CD8-positive, alpha-beta memory T cell (primary cell): ENCODE measurements at regions of chr5 and their contacts with region 1.

Region 1: DNA sequence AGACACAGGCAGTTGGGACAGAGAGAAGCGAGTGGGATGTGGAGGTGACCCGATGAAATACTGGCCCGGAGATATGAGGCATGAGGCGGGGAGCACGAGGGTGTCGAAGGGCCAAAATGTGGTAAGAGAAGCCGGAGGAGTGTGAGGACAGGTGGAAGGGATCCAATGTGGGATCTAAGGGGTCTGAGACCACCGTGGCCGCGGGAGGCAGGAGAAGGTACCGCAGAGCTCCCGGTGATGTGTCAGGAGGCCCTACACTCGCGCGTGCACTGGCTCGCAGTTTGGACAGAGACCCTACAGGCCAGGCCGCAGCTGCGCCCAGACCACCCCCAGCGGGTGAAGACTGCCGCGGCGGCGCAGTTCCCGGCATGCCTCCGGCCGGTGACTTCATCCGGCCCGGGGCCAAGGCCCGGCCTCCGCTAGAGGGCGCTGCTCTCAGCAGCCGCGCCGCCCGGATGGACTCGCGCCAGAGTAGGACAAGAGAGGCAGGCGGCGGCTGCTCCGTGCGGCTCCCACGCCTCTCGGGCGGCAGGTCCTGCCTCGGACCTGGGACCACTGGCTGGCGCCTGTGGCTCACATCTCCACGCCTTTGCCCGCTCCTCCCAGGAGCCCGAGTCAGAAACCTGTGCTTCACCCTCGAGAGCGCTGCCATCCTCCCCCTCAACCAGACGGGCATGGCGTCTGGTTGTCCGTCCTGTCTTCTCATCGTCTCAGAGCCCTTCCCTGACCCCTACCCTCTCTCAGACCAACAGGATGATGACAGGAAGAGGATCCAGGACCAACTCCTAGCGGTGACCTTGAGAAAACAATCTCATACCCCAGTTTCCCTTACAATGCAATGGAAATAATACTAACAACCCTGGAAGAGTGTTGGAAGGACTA is 35.4 kb upstream of the STING1 start:
- DNase-seq: peak; percentile 82 to 92 (median 87)
- H3K4me3 ChIP-seq: peak overlapping the region; percentile 96
- H3K4me3 Mint-ChIP-seq: peak overlapping the region; percentile 80 to 98 (median 88)
- H3K27ac ChIP-seq: peak overlapping the region; percentile 86
- H3K27ac Mint-ChIP-seq: peak overlapping the region; percentile 89 to 98 (median 94)
- H3K4me1 ChIP-seq: peaks cover 9% of the 10 kb centered on the region
- H3K4me1 Mint-ChIP-seq: peaks cover 20 to 23% (median 22%) of the 10 kb centered on the region in 3 donors
- H3K27me3 ChIP-seq: no peaks in the 10 kb centered on the region
- H3K27me3 Mint-ChIP-seq: peaks cover 4 to 6% of the 10 kb centered on the region in 2 donors

Region 2: DNA sequence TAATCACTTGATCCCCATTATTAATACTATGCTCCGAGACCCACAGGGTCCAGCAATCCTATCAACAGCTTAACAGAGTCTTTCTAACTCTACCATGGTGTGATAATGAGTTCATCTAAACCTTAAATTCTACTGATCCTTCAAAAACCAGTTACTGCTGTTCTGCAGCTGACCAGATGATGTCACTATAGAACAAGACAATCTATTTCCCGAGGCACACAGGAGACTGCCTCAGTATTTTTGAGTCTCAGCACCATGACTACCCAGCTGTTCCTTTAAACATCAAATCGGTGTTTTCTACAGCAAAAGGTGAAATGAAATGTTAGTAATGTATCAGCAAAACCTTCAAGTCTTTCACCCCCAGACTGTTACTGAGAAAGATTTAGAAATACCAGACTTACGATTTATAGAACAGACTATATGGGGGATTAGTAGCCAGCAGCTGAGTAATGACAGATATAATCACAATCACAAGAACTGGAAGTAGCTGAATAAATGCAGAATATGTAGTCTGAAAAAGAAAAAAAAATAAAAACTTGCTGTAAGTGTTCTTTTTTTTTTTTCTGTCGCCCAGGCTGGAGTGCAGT is 95.5 kb before region 1 on chr5:
- CTCF ChIA-PET with region 1: interaction called, 414 read pairs
- POLR2A ChIA-PET with region 1: interaction called, 3 read pairs
- DNase-seq: peak; percentile 6 to 73 (median 66)
- H3K4me3 ChIP-seq: no peak overlapping the region
- H3K4me3 Mint-ChIP-seq: no peak overlapping the region
- H3K27ac ChIP-seq: no peak overlapping the region
- H3K27ac Mint-ChIP-seq: peak overlapping the region in 5 of 8 donors; percentile 44 to 82 (median 56)
- H3K4me1 ChIP-seq: no peaks in the 10 kb centered on the region
- H3K4me1 Mint-ChIP-seq: peaks cover 3 to 6% (median 4%) of the 10 kb centered on the region in 3 donors
- H3K27me3 ChIP-seq: no peaks in the 10 kb centered on the region
- H3K27me3 Mint-ChIP-seq: peaks cover 0 to 2% of the 10 kb centered on the region in 2 donors

Region 3: GRCh38 chr5:139439013-139439903 is 78.7 kb before region 1 on chr5 and contains the start of gene DNAJC18:
- CTCF ChIA-PET with region 1: interaction called, 40 read pairs
- POLR2A ChIA-PET with region 1: interaction called, 6 read pairs
- DNase-seq: peak; percentile 81 to 91 (median 84)
- H3K4me3 ChIP-seq: peak within 1 kb of the TSS; percentile 98
- H3K4me3 Mint-ChIP-seq: peak within 1 kb of the TSS; percentile 95 to 99 (median 98)
- H3K27ac ChIP-seq: peak within 1 kb of the TSS; percentile 95
- H3K27ac Mint-ChIP-seq: peak within 1 kb of the TSS; percentile 94 to 100 (median 99)
- H3K4me1 ChIP-seq: peaks cover 29% of the 10 kb centered on the region
- H3K4me1 Mint-ChIP-seq: peaks cover 31 to 47% (median 45%) of the 10 kb centered on the region in 3 donors
- H3K27me3 ChIP-seq: no peaks in the 10 kb centered on the region
- H3K27me3 Mint-ChIP-seq: no peaks in the 10 kb centered on the region
- total RNA-seq, gene DNAJC18: 25.3 to 25.7 TPM

Region 4: GRCh38 chr5:139458580-139459406 is 59.1 kb before region 1 on chr5:
- CTCF ChIA-PET with region 1: interaction called, 14 read pairs
- POLR2A ChIA-PET with region 1: no interaction called
- DNase-seq: peak; percentile 67 to 91 (median 85)
- H3K4me3 ChIP-seq: no peak overlapping the region
- H3K4me3 Mint-ChIP-seq: peak overlapping the region in 6 of 7 donors; percentile 41 to 81 (median 64)
- H3K27ac ChIP-seq: no peak overlapping the region
- H3K27ac Mint-ChIP-seq: peak overlapping the region; percentile 90 to 98 (median 92)
- H3K4me1 ChIP-seq: peaks cover 60% of the 10 kb centered on the region
- H3K4me1 Mint-ChIP-seq: peaks cover 48 to 66% (median 59%) of the 10 kb centered on the region in 3 donors
- H3K27me3 ChIP-seq: no peaks in the 10 kb centered on the region
- H3K27me3 Mint-ChIP-seq: peaks cover 0 to 2% of the 10 kb centered on the region in 2 donors

Region 5: DNA sequence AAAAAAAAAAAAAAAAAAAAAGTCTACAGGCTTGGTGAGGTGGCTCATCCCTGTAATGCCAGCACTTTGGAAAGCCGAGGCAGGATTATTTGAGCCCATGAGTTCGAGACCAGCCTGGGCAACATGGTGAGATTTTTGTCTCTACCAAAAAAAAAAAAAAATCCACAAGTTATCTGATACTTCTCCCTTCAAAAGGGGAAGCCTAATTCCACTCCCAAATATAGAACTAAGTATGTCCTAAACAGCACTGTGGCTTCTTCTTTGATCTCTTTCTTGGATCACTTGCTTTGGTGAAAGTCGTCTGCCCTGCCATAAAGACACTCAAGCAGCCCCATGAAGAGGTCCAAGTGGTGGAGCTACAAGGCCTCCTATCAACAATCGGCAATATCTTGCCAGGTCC is 16.5 kb before region 1 on chr5:
- CTCF ChIA-PET with region 1: interaction called, 19 read pairs
- POLR2A ChIA-PET with region 1: interaction called, 3 read pairs
- DNase-seq: no peak
- H3K4me3 ChIP-seq: no peak overlapping the region
- H3K4me3 Mint-ChIP-seq: no peak overlapping the region
- H3K27ac ChIP-seq: no peak overlapping the region
- H3K27ac Mint-ChIP-seq: no peak overlapping the region
- H3K4me1 ChIP-seq: no peaks in the 10 kb centered on the region
- H3K4me1 Mint-ChIP-seq: no peaks in the 10 kb centered on the region
- H3K27me3 ChIP-seq: no peaks in the 10 kb centered on the region
- H3K27me3 Mint-ChIP-seq: no peaks in the 10 kb centered on the region

Region 6: DNA sequence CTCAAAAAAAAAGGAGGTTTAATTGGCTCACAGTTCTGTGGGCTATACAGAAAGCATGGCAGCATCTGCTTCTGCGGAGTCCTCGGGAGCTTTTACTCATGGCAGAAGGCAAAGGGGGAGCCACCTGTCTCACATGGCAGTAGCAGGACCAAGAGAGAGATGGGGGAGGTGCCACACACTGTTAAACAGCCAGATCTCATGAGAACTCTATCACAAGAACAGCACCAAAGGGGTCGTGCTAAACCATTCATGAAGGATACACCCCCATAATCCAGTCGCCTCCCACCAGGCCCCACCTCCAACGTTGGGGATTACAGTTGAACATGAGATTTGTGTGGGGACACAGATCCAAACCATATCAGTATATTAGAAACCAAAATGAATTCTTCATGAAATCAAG is 101.9 kb after region 1 on chr5:
- CTCF ChIA-PET with region 1: no interaction called
- POLR2A ChIA-PET with region 1: no interaction called
- DNase-seq: no peak
- H3K4me3 ChIP-seq: no peak overlapping the region
- H3K4me3 Mint-ChIP-seq: no peak overlapping the region
- H3K27ac ChIP-seq: no peak overlapping the region
- H3K27ac Mint-ChIP-seq: peak overlapping the region in 2 of 8 donors; percentile 40 to 76
- H3K4me1 ChIP-seq: no peaks in the 10 kb centered on the region
- H3K4me1 Mint-ChIP-seq: peaks cover 6 to 9% (median 8%) of the 10 kb centered on the region in 3 donors
- H3K27me3 ChIP-seq: no peaks in the 10 kb centered on the region
- H3K27me3 Mint-ChIP-seq: no peaks in the 10 kb centered on the region

Region 7: GRCh38 chr5:139725073-139725830 is 207.3 kb after region 1 on chr5:
- CTCF ChIA-PET with region 1: no interaction called
- POLR2A ChIA-PET with region 1: no interaction called
- DNase-seq: peak in 1 of 5 donors; percentile 23
- H3K4me3 ChIP-seq: no peak overlapping the region
- H3K4me3 Mint-ChIP-seq: no peak overlapping the region
- H3K27ac ChIP-seq: no peak overlapping the region
- H3K27ac Mint-ChIP-seq: peak overlapping the region in 1 of 8 donors; percentile 14
- H3K4me1 ChIP-seq: no peaks in the 10 kb centered on the region
- H3K4me1 Mint-ChIP-seq: no peaks in the 10 kb centered on the region
- H3K27me3 ChIP-seq: no peaks in the 10 kb centered on the region
- H3K27me3 Mint-ChIP-seq: no peaks in the 10 kb centered on the region